Naive thymus-derived CD4-positive, alpha-beta T cell (primary cell): ENCODE measurements at regions of chr2 and their contacts with region 1.

Region 1: DNA sequence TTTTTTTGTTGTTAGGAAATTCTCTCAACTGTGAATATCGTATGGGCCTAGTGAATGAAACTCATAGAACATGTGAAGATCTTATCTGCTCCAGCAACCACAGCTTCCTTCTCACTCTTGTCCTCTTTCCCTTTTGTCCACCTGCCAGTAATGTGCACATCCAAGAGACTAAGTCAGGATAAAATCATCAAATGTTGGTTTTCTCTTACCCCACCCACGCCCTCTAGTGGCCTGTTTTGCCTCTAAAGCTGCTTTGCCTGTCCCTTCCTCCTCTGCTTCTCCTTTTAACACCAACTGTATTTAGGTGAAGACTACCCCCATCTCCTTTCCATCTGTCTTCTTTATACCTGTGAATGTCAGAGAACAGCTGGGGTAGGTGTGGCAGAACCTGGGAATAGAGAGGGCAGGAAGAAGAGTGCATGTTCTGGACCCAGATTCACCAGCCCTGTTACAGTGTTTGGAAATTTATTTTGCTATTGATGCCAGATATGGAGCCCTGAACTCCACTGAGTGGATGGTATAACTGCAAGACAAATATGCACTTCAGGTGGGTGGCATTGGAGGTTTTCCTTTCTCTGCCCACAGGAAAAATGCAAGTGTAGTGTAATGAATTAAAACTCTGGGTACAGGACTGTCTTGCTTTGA is 8.4 kb upstream of the MGAT5 start:
- DNase-seq: peak; percentile 47 to 71 (median 64)
- ATAC-seq: peak; percentile 85
- H3K4me3 ChIP-seq: no peak overlapping the region
- H3K4me3 Mint-ChIP-seq: peak overlapping the region; percentile 3 to 68 (median 48)
- H3K27ac ChIP-seq: no peak overlapping the region
- H3K27ac Mint-ChIP-seq: peak overlapping the region in 8 of 9 donors; percentile 4 to 82 (median 73)
- H3K4me1 ChIP-seq: peaks cover 50 to 54% of the 10 kb centered on the region in 2 donors
- H3K4me1 Mint-ChIP-seq: peaks cover 52 to 91% (median 74%) of the 10 kb centered on the region in 7 donors
- H3K27me3 ChIP-seq: no peaks in the 10 kb centered on the region
- H3K27me3 Mint-ChIP-seq: no peaks in the 10 kb centered on the region

Region 2: DNA sequence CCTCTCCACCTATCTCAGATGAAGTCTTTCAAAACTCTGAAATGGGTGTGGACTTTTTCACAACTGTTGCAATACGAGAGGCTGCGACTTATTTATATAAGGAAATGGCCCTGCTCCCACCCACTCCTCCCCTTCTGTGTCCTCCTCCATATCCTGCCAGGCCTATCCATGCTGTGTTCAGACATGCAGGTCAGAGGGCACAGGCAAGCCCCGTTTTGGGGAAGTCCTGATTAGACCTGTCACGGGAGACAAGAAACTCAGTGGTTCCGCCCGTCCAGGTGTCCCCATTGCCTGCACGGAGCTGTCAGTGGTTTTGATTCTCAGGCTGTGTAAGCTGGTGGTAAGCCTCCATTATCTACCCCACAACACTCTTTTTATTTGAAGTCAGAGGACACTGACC is 91.2 kb before region 1 on chr2:
- CTCF ChIA-PET with region 1: no interaction called
- POLR2A ChIA-PET with region 1: no interaction called
- intact Hi-C with region 1: no loop called
- DNase-seq: no peak
- ATAC-seq: peak; percentile 52
- H3K4me3 ChIP-seq: no peak overlapping the region
- H3K4me3 Mint-ChIP-seq: no peak overlapping the region
- H3K27ac ChIP-seq: no peak overlapping the region
- H3K27ac Mint-ChIP-seq: peak overlapping the region in 2 of 9 donors; percentile 20 to 38
- H3K4me1 ChIP-seq: no peaks in the 10 kb centered on the region
- H3K4me1 Mint-ChIP-seq: peaks cover 4 to 65% (median 51%) of the 10 kb centered on the region in 7 donors
- H3K27me3 ChIP-seq: no peaks in the 10 kb centered on the region
- H3K27me3 Mint-ChIP-seq: no peaks in the 10 kb centered on the region

Region 3: DNA sequence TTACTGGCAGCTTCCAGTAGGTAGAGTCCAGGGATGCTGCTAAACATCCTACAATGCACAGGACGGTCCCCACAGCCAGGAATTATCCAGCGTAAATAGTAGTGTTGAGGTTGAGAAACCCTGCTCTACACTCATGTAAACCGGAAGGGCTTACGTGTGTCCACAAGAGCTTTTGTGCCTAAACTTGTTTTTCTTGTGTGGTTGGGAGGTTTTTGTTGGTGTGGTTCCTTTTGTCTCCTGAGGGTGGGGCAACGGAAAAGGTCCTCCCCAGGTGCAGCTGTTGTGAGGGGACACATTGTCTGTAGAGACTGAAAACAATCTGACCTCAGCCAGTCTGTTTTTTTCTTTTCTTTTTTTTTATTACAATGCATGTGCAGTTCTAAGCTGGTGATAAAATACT is 64.3 kb before region 1 on chr2:
- CTCF ChIA-PET with region 1: no interaction called
- POLR2A ChIA-PET with region 1: no interaction called
- intact Hi-C with region 1: loop called in 1 of 2 experiments (anchors 2 kb)
- DNase-seq: peak in 8 of 9 donors; percentile 30 to 79 (median 68)
- ATAC-seq: peak; percentile 87
- H3K4me3 ChIP-seq: no peak overlapping the region
- H3K4me3 Mint-ChIP-seq: peak overlapping the region; percentile 54 to 86 (median 67)
- H3K27ac ChIP-seq: peak overlapping the region; percentile 18
- H3K27ac Mint-ChIP-seq: peak overlapping the region; percentile 84 to 97 (median 91)
- H3K4me1 ChIP-seq: peaks cover 22 to 45% of the 10 kb centered on the region in 2 donors
- H3K4me1 Mint-ChIP-seq: peaks cover 52 to 95% (median 93%) of the 10 kb centered on the region in 7 donors
- H3K27me3 ChIP-seq: no peaks in the 10 kb centered on the region
- H3K27me3 Mint-ChIP-seq: no peaks in the 10 kb centered on the region

Region 4: DNA sequence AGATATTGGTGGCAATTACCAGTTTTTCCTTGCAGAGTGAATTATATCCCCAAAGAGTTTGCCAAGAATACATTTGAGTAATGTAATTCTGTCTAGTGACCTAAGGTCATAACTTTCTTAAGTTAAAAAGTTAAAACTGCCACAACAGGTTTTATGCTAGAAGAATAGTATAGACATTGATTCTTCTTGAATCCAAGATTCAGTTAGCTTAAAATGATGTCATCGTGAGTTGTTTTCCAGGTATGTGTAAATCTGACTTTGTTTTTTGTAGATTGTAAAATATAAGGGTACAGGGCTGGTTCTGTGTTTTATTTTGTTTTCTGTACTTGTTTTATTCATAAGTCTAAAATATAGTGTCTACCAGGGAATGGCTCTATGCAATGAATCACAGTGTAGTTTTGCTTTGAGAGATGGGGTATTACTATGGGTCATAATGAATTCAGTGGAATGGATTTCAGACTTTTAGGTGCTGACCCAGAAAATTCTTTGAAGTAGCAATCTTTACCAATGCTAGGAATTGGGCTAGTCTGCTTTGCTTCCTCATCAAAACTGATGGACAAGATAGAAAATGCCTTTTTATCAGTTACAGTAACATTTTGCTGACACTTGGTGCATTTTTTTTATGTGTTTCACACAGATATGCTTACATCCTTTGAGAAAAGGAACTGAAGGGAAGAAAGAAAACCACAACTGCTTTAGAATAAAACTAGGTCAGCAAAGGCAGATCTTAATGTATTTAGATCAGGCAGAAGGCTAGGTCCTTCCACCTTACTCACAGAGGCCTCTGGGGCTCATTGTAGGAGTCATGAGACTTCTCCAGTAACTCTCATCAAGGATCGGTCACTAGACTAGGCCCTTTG is 12.4 kb before region 1 on chr2:
- CTCF ChIA-PET with region 1: interaction called, 13 read pairs
- POLR2A ChIA-PET with region 1: interaction called, 4 read pairs
- intact Hi-C with region 1: loop called (anchors 1 kb)
- DNase-seq: peak in 7 of 9 donors; percentile 13 to 68 (median 57)
- ATAC-seq: peak; percentile 84
- H3K4me3 ChIP-seq: peak overlapping the region; percentile 17
- H3K4me3 Mint-ChIP-seq: peak overlapping the region; percentile 29 to 81 (median 64)
- H3K27ac ChIP-seq: peak overlapping the region; percentile 37
- H3K27ac Mint-ChIP-seq: peak overlapping the region; percentile 62 to 87 (median 76)
- H3K4me1 ChIP-seq: peaks cover 56 to 59% of the 10 kb centered on the region in 2 donors
- H3K4me1 Mint-ChIP-seq: peaks cover 57 to 80% (median 75%) of the 10 kb centered on the region in 7 donors
- H3K27me3 ChIP-seq: no peaks in the 10 kb centered on the region
- H3K27me3 Mint-ChIP-seq: no peaks in the 10 kb centered on the region

Region 5: GRCh38 chr2:134282629-134283400 is 37.4 kb after region 1 on chr2:
- CTCF ChIA-PET with region 1: interaction called, 3 read pairs
- POLR2A ChIA-PET with region 1: no interaction called
- intact Hi-C with region 1: loop called in 1 of 2 experiments (anchors 2 kb)
- DNase-seq: peak in 5 of 9 donors; percentile 13 to 46 (median 28)
- ATAC-seq: peak; percentile 75
- H3K4me3 ChIP-seq: no peak overlapping the region
- H3K4me3 Mint-ChIP-seq: peak overlapping the region; percentile 53 to 86 (median 65)
- H3K27ac ChIP-seq: peak overlapping the region; percentile 33
- H3K27ac Mint-ChIP-seq: peak overlapping the region; percentile 72 to 96 (median 91)
- H3K4me1 ChIP-seq: peaks cover 32 to 47% of the 10 kb centered on the region in 2 donors
- H3K4me1 Mint-ChIP-seq: peaks cover 15 to 69% (median 54%) of the 10 kb centered on the region in 7 donors
- H3K27me3 ChIP-seq: no peaks in the 10 kb centered on the region
- H3K27me3 Mint-ChIP-seq: peaks cover 0 to 8% (median 0%) of the 10 kb centered on the region in 5 donors

Region 6: GRCh38 chr2:134324947-134325346 is 79.5 kb after region 1 on chr2:
- CTCF ChIA-PET with region 1: no interaction called
- POLR2A ChIA-PET with region 1: no interaction called
- intact Hi-C with region 1: loop called in 1 of 2 experiments (anchors 2 kb)
- DNase-seq: no peak
- ATAC-seq: peak; percentile 65
- H3K4me3 ChIP-seq: no peak overlapping the region
- H3K4me3 Mint-ChIP-seq: peak overlapping the region in 2 of 10 donors; percentile 11 to 57
- H3K27ac ChIP-seq: no peak overlapping the region
- H3K27ac Mint-ChIP-seq: peak overlapping the region in 3 of 9 donors; percentile 45 to 59 (median 46)
- H3K4me1 ChIP-seq: peaks cover 19 to 29% of the 10 kb centered on the region in 2 donors
- H3K4me1 Mint-ChIP-seq: peaks cover 59 to 73% (median 66%) of the 10 kb centered on the region in 7 donors
- H3K27me3 ChIP-seq: no peaks in the 10 kb centered on the region
- H3K27me3 Mint-ChIP-seq: no peaks in the 10 kb centered on the region

Region 7: GRCh38 chr2:134835471-134835870 is 590.0 kb after region 1 on chr2:
- CTCF ChIA-PET with region 1: no interaction called
- POLR2A ChIA-PET with region 1: no interaction called
- intact Hi-C with region 1: no loop called
- DNase-seq: no peak
- ATAC-seq: no peak
- H3K4me3 ChIP-seq: no peak overlapping the region
- H3K4me3 Mint-ChIP-seq: no peak overlapping the region
- H3K27ac ChIP-seq: no peak overlapping the region
- H3K27ac Mint-ChIP-seq: no peak overlapping the region
- H3K4me1 ChIP-seq: no peaks in the 10 kb centered on the region
- H3K4me1 Mint-ChIP-seq: no peaks in the 10 kb centered on the region
- H3K27me3 ChIP-seq: no peaks in the 10 kb centered on the region
- H3K27me3 Mint-ChIP-seq: peaks cover 5 to 30% (median 27%) of the 10 kb centered on the region in 5 donors